Adrenal gland (tissue), 19 donors: ENCODE measurements at regions of chr9 and their contacts with region 1.

Region 1: DNA sequence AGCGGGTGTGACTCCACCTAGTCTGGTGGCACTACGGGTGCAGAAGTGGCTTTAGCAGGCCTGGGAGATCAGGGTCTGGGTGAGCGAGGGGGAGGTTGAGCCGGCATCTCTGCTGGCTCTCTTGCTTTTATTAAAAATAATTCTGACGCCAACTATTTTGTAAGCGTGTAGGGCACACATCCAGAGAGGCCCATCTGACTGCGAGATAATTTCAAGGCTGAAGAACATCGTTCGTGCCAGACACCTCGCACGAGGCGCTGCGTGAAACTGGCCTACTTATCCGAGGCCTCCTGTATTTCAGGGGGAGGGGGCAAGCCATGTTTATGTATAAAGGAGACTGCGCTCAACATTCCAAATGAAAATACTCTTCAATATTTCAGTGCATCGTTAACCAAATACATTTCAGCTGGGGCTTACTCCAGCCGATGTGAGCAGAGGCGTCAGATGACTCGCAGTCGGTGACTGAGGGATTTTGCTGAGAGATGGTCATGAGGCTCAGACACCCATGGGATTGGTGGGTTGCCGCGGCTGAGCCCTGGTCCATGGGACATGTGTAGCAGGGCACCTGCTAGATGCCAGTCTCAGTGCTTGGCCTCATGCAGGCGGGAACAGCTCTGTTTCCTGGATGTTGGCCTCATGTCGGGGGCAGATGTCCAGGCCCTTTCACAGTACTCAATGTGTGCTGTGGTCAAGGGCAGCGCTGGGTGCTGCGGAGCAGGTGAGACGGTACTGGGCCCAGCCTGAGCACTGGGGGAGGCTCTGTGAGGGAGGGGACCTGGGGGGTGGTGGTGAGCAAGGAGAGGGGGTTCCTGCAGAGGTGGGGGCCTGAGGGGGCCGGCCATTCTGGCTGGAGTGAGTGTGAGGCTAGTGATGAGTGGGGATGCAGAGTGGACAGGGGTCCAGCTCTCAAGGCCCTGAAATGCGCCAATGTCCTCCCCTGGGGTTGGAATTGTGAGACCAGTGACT is 201.5 kb downstream of the DAB2IP start:
- DNase-seq: peak; percentile 79 to 93 (median 85)
- H3K4me3 ChIP-seq: no peak overlapping the region
- H3K27ac ChIP-seq: peak overlapping the region in 4 of 5 donors; percentile 36 to 83 (median 60)
- H3K4me1 ChIP-seq: peaks cover 5 to 13% of the 10 kb centered on the region in 2 donors
- H3K27me3 ChIP-seq: no peaks in the 10 kb centered on the region
- CTCF ChIP-seq: no peak
- POLR2A ChIP-seq: peak in 1 of 2 donors; percentile 51

Region 2: GRCh38 chr9:121725008-121725775 is 127.7 kb before region 1 on chr9:
- intact Hi-C with region 1: loop called in 1 of 2 experiments (anchors 10 kb)
- DNase-seq: peak; percentile 70 to 96 (median 78)
- H3K4me3 ChIP-seq: no peak overlapping the region
- H3K27ac ChIP-seq: peak overlapping the region in 4 of 5 donors; percentile 24 to 90 (median 66)
- H3K4me1 ChIP-seq: peaks cover 11 to 36% of the 10 kb centered on the region in 2 donors
- H3K27me3 ChIP-seq: no peaks in the 10 kb centered on the region
- CTCF ChIP-seq: no peak
- POLR2A ChIP-seq: no peak

Region 3: DNA sequence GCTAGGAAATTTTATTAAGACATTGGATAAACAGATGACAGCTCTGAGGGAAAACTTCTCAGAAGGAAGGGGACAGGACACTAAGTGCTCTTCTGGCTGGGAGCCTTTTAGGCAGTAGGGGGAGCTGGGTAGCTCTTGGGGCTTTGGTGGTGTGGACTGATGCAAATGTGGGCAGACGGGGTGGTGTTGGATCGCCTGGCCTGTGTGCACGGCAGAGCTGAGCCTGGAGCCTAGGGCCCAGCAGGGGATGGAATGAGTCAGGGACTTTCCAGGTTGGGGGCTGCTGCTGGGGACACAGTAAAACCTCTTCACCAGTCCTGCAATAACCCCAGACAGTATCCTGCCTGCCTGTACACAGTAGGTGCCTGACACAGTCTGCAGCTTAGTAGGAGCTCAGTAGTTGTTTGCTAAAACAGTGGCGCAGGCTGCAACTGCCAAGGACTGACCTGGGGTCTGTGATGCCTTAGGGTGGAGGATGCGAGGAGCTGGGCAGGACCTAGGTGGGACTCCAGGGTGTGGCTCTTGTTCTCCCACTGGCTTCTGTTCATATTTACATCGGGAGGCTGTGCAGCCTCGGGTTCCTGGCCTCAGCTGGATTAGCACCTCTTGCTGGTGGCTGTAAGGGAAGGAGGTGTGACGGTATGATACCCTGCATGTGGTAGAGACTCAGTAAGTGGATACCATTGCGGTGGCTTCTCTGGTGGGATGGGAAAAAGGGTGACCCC is 117.7 kb before region 1 on chr9:
- intact Hi-C with region 1: no loop called
- DNase-seq: no peak
- H3K4me3 ChIP-seq: no peak overlapping the region
- H3K27ac ChIP-seq: peak overlapping the region in 3 of 5 donors; percentile 20 to 87 (median 80)
- H3K4me1 ChIP-seq: peaks cover 25 to 55% of the 10 kb centered on the region in 2 donors
- H3K27me3 ChIP-seq: no peaks in the 10 kb centered on the region
- CTCF ChIP-seq: peak in 2 of 6 experiments; percentile 25 to 28
- POLR2A ChIP-seq: no peak

Region 4: GRCh38 chr9:121765021-121765950 is 87.6 kb before region 1 on chr9:
- intact Hi-C with region 1: loop called (anchors 10 kb)
- DNase-seq: peak; percentile 79 to 92 (median 82)
- H3K4me3 ChIP-seq: no peak overlapping the region
- H3K27ac ChIP-seq: peak overlapping the region; percentile 43 to 86 (median 77)
- H3K4me1 ChIP-seq: peaks cover 24 to 27% of the 10 kb centered on the region in 2 donors
- H3K27me3 ChIP-seq: no peaks in the 10 kb centered on the region
- CTCF ChIP-seq: peak in 1 of 6 experiments; percentile 31
- POLR2A ChIP-seq: no peak

Region 5: GRCh38 chr9:121770415-121771273 is 82.3 kb before region 1 on chr9:
- intact Hi-C with region 1: loop called (anchors 10 kb)
- DNase-seq: no peak
- H3K4me3 ChIP-seq: no peak overlapping the region
- H3K27ac ChIP-seq: peak overlapping the region in 1 of 5 donors; percentile 76
- H3K4me1 ChIP-seq: peaks cover 18 to 25% of the 10 kb centered on the region in 2 donors
- H3K27me3 ChIP-seq: no peaks in the 10 kb centered on the region
- CTCF ChIP-seq: no peak
- POLR2A ChIP-seq: no peak

Region 6: DNA sequence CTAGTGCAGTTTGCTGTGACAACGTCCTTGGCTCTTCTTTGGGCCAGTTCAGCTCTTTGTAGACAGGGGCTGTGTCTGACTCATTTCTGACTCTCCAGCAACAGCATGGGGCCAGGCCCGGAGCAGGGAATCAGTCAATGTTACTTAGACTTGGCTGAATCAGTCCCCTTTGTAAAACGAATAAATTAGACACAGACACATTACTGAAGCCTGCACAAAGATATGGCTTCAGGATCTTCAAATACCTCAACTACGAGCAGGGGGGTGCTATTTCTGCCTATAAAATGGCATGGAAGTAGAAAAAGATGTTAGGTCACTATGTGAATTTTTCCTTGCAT is 35.5 kb after region 1 on chr9:
- intact Hi-C with region 1: no loop called
- DNase-seq: peak; percentile 72 to 92 (median 88)
- H3K4me3 ChIP-seq: no peak overlapping the region
- H3K27ac ChIP-seq: peak overlapping the region; percentile 7 to 84 (median 59)
- H3K4me1 ChIP-seq: peaks cover 14 to 32% of the 10 kb centered on the region in 2 donors
- H3K27me3 ChIP-seq: no peaks in the 10 kb centered on the region
- CTCF ChIP-seq: peak in 5 of 6 experiments; percentile 31 to 43 (median 36)
- POLR2A ChIP-seq: no peak

Region 7: DNA sequence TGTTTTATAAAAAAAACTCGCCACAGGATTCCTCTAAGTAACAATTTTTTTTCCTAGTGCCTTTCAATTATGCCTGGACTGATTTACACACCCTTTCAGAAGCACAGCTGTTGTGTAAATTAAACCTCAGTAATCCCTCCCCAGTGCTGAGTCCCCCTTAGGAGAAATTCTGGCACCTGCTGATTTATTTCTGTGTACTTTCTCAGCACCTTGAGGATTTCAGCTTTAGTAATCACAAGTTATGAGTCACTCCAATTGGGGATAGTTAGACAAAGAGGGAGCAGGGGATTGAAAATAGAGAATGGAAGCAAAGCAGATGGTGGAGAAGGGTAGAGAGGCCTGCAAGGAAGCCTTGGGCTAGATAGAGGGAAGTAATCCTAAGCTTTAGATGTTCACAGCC is 68.5 kb after region 1 on chr9:
- intact Hi-C with region 1: no loop called
- DNase-seq: no peak
- H3K4me3 ChIP-seq: no peak overlapping the region
- H3K27ac ChIP-seq: no peak overlapping the region
- H3K4me1 ChIP-seq: no peaks in the 10 kb centered on the region
- H3K27me3 ChIP-seq: no peaks in the 10 kb centered on the region
- CTCF ChIP-seq: no peak
- POLR2A ChIP-seq: no peak